Naive thymus-derived CD4-positive, alpha-beta T cell (primary cell): ENCODE measurements at regions of chr4 and their contacts with region 1.

Region 1: GRCh38 chr4:108570993-108571569 is 49.3 kb upstream of the RPL34 start:
- DNase-seq: no peak
- ATAC-seq: no peak
- H3K4me3 ChIP-seq: no peak overlapping the region
- H3K4me3 Mint-ChIP-seq: no peak overlapping the region
- H3K27ac ChIP-seq: no peak overlapping the region
- H3K27ac Mint-ChIP-seq: peak overlapping the region in 5 of 9 donors; percentile 0 to 74 (median 28)
- H3K4me1 ChIP-seq: peaks cover 0 to 11% of the 10 kb centered on the region in 2 donors
- H3K4me1 Mint-ChIP-seq: peaks cover 13 to 44% (median 32%) of the 10 kb centered on the region in 7 donors
- H3K27me3 ChIP-seq: no peaks in the 10 kb centered on the region
- H3K27me3 Mint-ChIP-seq: no peaks in the 10 kb centered on the region

Region 2: DNA sequence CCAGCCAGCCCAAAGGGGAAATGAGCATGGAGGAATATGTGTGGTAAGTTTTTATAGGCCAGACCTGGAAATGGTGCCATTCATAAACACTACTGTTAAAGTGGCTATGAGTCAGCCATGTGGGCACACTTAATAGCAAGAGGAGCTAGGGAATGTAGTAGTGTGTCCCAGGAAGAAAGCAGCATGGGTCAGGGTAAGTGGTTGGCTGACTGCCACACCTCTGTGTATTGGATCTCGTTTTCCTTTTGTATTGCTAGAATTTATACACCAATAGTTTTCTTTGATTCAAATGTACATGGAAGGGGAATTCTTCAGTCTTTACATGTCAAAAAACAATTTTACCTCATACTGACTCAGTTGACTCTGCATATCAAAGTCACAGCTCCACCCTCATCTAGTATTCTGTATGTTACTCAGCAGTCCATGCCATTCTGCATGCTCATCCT is 769.3 kb before region 1 on chr4:
- CTCF ChIA-PET with region 1: no interaction called
- POLR2A ChIA-PET with region 1: no interaction called
- intact Hi-C with region 1: no loop called
- DNase-seq: no peak
- ATAC-seq: no peak
- H3K4me3 ChIP-seq: no peak overlapping the region
- H3K4me3 Mint-ChIP-seq: no peak overlapping the region
- H3K27ac ChIP-seq: no peak overlapping the region
- H3K27ac Mint-ChIP-seq: peak overlapping the region in 1 of 9 donors; percentile 33
- H3K4me1 ChIP-seq: no peaks in the 10 kb centered on the region
- H3K4me1 Mint-ChIP-seq: peaks cover 0 to 5% (median 0%) of the 10 kb centered on the region in 7 donors
- H3K27me3 ChIP-seq: peaks cover 0 to 3% of the 10 kb centered on the region in 2 donors
- H3K27me3 Mint-ChIP-seq: peaks cover 24 to 55% (median 43%) of the 10 kb centered on the region in 5 donors

Region 3: GRCh38 chr4:108018040-108018883 is 552.8 kb before region 1 on chr4:
- CTCF ChIA-PET with region 1: interaction called, 77 read pairs
- POLR2A ChIA-PET with region 1: interaction called, 4 read pairs
- intact Hi-C with region 1: loop called (anchors 1 kb)
- DNase-seq: peak; percentile 63 to 86 (median 76)
- ATAC-seq: peak; percentile 84
- H3K4me3 ChIP-seq: no peak overlapping the region
- H3K4me3 Mint-ChIP-seq: no peak overlapping the region
- H3K27ac ChIP-seq: no peak overlapping the region
- H3K27ac Mint-ChIP-seq: peak overlapping the region in 6 of 9 donors; percentile 5 to 86 (median 52)
- H3K4me1 ChIP-seq: no peaks in the 10 kb centered on the region
- H3K4me1 Mint-ChIP-seq: peaks cover 0 to 27% (median 14%) of the 10 kb centered on the region in 7 donors
- H3K27me3 ChIP-seq: no peaks in the 10 kb centered on the region
- H3K27me3 Mint-ChIP-seq: no peaks in the 10 kb centered on the region

Region 4: DNA sequence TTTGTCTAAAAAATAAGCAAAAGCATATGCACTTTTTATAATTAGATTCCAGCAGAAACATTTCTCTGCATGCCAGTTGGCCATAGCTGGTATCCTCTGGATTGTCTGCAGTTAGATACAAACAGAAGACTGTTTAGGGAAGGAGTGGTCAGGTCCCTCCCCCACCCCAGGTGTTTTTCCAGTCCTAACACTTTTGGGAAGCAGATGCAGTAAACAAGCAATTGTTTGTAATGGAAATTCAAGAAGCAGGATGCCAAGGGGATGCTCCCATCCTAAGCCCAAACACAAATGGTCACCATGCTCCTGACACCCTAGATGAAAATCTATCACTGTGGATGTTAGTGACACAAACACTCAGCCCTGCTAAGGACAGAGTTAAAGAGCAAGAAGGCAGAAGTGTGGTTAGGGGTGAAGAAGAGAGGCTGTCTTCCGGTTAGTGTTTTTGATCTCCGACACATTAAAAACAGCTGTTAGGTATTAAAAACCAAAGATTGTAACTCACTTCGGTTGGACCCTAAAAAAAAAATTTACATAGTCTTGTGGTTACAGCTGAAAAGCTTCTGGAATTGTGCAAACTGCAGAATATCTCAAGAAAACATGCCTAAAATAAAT is 410.2 kb before region 1 on chr4:
- CTCF ChIA-PET with region 1: interaction called, 11 read pairs
- POLR2A ChIA-PET with region 1: interaction called, 4 read pairs
- intact Hi-C with region 1: no loop called
- DNase-seq: peak in 6 of 9 donors; percentile 47 to 63 (median 51)
- ATAC-seq: peak; percentile 62
- H3K4me3 ChIP-seq: peak overlapping the region; percentile 77
- H3K4me3 Mint-ChIP-seq: peak overlapping the region; percentile 83 to 100 (median 97)
- H3K27ac ChIP-seq: peak overlapping the region; percentile 87
- H3K27ac Mint-ChIP-seq: peak overlapping the region; percentile 63 to 97 (median 92)
- H3K4me1 ChIP-seq: peaks cover 31 to 41% of the 10 kb centered on the region in 2 donors
- H3K4me1 Mint-ChIP-seq: peaks cover 12 to 70% (median 44%) of the 10 kb centered on the region in 7 donors
- H3K27me3 ChIP-seq: no peaks in the 10 kb centered on the region
- H3K27me3 Mint-ChIP-seq: peaks cover 0 to 4% (median 0%) of the 10 kb centered on the region in 5 donors

Region 5: DNA sequence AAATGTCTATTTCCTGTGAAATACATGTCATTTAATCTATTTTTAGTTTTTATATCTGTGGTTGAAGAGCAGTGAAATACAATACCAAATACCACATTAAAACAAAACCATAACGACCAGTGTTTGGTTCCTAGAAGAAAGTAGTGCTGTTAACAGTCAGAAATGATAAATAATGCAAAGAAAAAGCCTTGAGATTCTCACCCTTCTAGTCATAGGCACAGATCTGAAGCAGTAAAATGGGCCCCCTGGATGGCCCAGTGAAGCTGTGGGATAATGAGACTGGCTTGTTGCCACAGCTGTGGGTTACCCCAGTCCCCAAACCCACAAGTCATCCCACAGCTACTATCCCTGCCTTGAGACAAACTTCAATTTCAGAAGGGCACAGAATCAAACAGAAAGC is 88.0 kb before region 1 on chr4:
- CTCF ChIA-PET with region 1: interaction called, 14 read pairs
- POLR2A ChIA-PET with region 1: interaction called, 8 read pairs
- intact Hi-C with region 1: no loop called
- DNase-seq: peak in 4 of 9 donors; percentile 10 to 31 (median 18)
- ATAC-seq: peak; percentile 31
- H3K4me3 ChIP-seq: peak overlapping the region; percentile 11
- H3K4me3 Mint-ChIP-seq: peak overlapping the region; percentile 38 to 82 (median 74)
- H3K27ac ChIP-seq: no peak overlapping the region
- H3K27ac Mint-ChIP-seq: peak overlapping the region in 8 of 9 donors; percentile 34 to 92 (median 68)
- H3K4me1 ChIP-seq: peaks cover 18 to 21% of the 10 kb centered on the region in 2 donors
- H3K4me1 Mint-ChIP-seq: peaks cover 26 to 47% (median 44%) of the 10 kb centered on the region in 7 donors
- H3K27me3 ChIP-seq: no peaks in the 10 kb centered on the region
- H3K27me3 Mint-ChIP-seq: no peaks in the 10 kb centered on the region

Region 6: DNA sequence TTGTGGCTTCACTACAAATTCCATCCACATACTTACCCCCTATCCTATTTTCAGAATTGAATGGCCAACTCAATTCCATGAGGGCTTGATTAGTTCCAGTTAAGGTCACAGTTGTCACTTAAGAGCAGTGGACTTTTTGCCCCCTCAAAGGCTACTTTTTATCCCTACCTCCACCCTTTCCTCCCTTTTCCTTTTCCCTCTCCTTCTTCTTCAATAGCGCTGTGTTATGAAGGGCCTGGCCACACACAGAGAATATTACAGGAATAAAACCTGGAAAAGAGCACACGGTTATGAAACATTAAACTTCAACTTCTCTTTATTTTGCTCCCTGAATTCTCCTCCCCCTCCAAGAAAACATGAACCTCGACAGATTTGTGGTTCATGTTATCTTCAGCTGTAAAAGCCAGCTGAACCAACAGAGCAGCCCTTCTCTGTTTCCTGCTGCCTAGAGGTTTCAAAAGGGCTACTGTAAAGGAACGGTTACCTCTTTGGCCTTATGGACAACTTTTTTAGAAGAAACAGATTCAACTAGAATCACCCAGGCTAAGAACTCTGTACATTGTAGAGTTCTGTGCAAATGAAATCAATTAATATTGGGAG is 37.7 kb before region 1 on chr4:
- CTCF ChIA-PET with region 1: interaction called, 13 read pairs
- POLR2A ChIA-PET with region 1: no interaction called
- intact Hi-C with region 1: loop called in 1 of 2 experiments (anchors 2 kb)
- DNase-seq: peak in 1 of 9 donors; percentile 29
- ATAC-seq: no peak
- H3K4me3 ChIP-seq: no peak overlapping the region
- H3K4me3 Mint-ChIP-seq: peak overlapping the region; percentile 52 to 91 (median 66)
- H3K27ac ChIP-seq: no peak overlapping the region
- H3K27ac Mint-ChIP-seq: peak overlapping the region; percentile 28 to 89 (median 69)
- H3K4me1 ChIP-seq: peaks cover 9 to 75% of the 10 kb centered on the region in 2 donors
- H3K4me1 Mint-ChIP-seq: peaks cover 50 to 97% (median 91%) of the 10 kb centered on the region in 7 donors
- H3K27me3 ChIP-seq: no peaks in the 10 kb centered on the region
- H3K27me3 Mint-ChIP-seq: no peaks in the 10 kb centered on the region

Region 7: DNA sequence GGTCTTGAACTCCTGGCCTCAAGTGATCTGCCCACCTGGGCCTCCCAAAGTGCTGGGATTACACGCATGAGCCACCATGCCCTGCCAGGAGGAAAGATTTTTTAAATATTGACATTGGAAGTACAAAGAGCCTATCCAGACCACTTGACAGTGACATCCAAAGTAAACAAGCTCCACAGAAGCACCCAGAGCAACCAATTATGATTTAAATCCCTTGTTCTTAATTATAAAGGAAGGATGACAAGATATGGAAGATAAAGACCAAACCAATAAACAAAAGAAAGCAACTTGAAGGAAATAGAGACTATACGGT is 21.5 kb after region 1 on chr4:
- CTCF ChIA-PET with region 1: no interaction called
- POLR2A ChIA-PET with region 1: no interaction called
- intact Hi-C with region 1: no loop called
- DNase-seq: no peak
- ATAC-seq: no peak
- H3K4me3 ChIP-seq: no peak overlapping the region
- H3K4me3 Mint-ChIP-seq: no peak overlapping the region
- H3K27ac ChIP-seq: no peak overlapping the region
- H3K27ac Mint-ChIP-seq: no peak overlapping the region
- H3K4me1 ChIP-seq: no peaks in the 10 kb centered on the region
- H3K4me1 Mint-ChIP-seq: peaks cover 0 to 11% (median 5%) of the 10 kb centered on the region in 7 donors
- H3K27me3 ChIP-seq: no peaks in the 10 kb centered on the region
- H3K27me3 Mint-ChIP-seq: no peaks in the 10 kb centered on the region